Activated CD4-positive, alpha-beta T cell treated with anti-CD3 and anti-CD28 coated beads, Interleukin-2, amount 10 ng/mL, durations not matched to agents 24 days and 14 days (primary cell): ENCODE measurements at regions of chr19 and their contacts with region 1.

Region 1: DNA sequence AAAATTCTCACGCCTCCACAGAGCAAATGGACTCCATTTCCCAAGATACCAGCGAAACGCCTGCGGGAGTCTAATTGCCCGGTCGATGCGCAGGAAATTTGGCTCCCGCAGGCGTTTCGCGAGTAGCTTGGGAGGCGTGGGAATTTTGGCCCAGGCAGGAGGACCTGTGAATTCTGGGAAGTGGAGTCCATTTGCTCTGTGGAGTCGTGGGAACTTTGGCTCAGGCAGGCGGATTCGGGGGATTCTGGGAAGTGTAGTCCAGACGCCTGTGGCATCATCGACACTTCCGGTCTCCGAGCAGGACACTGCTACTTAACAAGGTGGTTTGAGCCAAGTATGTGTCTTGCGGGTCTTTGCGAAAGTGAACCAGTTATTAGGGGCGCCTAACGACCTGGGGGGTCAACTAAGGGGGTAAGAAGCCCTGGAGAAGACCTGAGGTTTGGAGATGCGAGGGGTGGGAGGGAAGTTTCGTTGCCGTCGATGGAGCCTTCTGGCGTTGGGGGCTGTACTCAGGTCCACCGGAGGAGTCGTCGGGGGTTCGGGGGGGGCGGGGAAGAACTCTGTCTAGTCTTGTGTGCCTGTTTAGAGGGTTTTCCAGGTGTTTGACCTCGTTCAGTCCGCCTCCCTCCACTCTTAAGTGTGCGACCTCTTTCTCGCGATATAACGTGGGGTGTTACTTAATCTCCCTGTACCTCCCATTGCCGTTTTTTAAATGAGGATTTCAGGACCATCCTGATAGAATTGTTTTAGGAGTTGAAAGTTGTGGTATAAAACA is at the start of gene ZNF155:
- DNase-seq: peak; percentile 91
- H3K4me3 Mint-ChIP-seq: peak within 1 kb of the TSS; percentile 97
- H3K27ac Mint-ChIP-seq: peak within 1 kb of the TSS; percentile 93
- H3K4me1 Mint-ChIP-seq: peaks cover 8% of the 10 kb centered on the region
- H3K27me3 Mint-ChIP-seq: no peaks in the 10 kb centered on the region
- total RNA-seq, gene ZNF155: 4.6 and 6.6 TPM in 2 replicates

Region 2: GRCh38 chr19:43668406-43669158 is 315.5 kb before region 1 on chr19:
- intact Hi-C with region 1: no loop called
- DNase-seq: peak; percentile 98
- H3K4me3 Mint-ChIP-seq: peak overlapping the region; percentile 91
- H3K27ac Mint-ChIP-seq: peak overlapping the region; percentile 86
- H3K4me1 Mint-ChIP-seq: peaks cover 40% of the 10 kb centered on the region
- H3K27me3 Mint-ChIP-seq: peaks cover 7% of the 10 kb centered on the region

Region 3: DNA sequence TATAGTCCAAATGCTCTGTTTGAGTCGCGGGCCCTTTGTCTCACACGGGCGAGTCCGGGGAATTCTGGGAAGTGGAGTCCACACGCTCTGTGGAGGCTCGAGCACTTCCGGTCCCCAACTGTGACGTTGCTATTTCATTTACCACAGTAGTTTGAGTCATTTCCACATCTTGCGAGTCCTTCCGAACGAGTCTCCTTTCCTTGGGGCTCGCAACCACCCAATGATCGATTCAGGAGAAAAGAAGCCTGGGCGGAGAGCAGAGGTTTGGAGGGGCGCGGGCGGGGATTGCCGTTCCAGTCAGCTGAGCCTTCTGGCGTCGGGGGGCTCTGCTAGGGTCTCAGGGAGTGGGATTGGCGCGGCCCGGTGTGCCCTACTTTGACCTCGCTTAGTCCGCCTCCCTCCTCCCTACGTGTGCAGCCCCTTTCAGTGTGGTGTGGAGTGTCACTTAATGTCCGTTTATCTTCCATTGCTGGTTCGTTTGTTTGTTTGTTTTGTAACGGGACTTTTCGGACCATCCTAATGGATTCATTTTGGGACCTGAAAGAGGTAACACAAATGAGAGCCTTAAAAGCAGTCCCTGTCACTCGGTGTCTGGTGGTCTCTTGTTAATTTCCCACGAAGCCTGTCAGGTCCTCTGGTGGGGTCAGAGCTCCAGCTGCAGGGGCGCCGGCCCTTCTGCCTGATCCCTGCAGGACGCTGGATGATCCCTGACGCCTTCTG is 41.3 kb after region 1 on chr19 and contains the start of gene ZNF222:
- intact Hi-C with region 1: loop called (anchors 1 kb)
- DNase-seq: peak; percentile 92
- H3K4me3 Mint-ChIP-seq: peak within 1 kb of the TSS; percentile 99
- H3K27ac Mint-ChIP-seq: peak within 1 kb of the TSS; percentile 91
- H3K4me1 Mint-ChIP-seq: peaks cover 16% of the 10 kb centered on the region
- H3K27me3 Mint-ChIP-seq: no peaks in the 10 kb centered on the region
- total RNA-seq, gene ZNF222: 1.1 and 1.8 TPM in 2 replicates